Heart right ventricle (tissue), 16 donors: ENCODE measurements at regions of chr3 and their contacts with region 1.

Region 1: GRCh38 chr3:149717391-149718056 is 34.8 kb downstream of the COMMD2 start:
- DNase-seq: peak in 1 of 2 donors; percentile 66
- ATAC-seq: peak in 7 of 8 donors; percentile 51 to 79 (median 72)
- H3K4me3 ChIP-seq: peak overlapping the region in 3 of 10 donors; percentile 15 to 31 (median 25)
- H3K27ac ChIP-seq: peak overlapping the region in 3 of 10 donors; percentile 3 to 35 (median 29)
- H3K4me1 ChIP-seq: peaks cover 0 to 10% (median 3%) of the 10 kb centered on the region in 9 donors
- H3K27me3 ChIP-seq: no peaks in the 10 kb centered on the region
- CTCF ChIP-seq: peak; percentile 54 to 87 (median 77)

Region 2: GRCh38 chr3:149058602-149059001 is 658.9 kb before region 1 on chr3:
- intact Hi-C with region 1: no loop called
- DNase-seq: no peak
- ATAC-seq: no peak
- H3K4me3 ChIP-seq: no peak overlapping the region
- H3K27ac ChIP-seq: no peak overlapping the region
- H3K4me1 ChIP-seq: no peaks in the 10 kb centered on the region
- H3K27me3 ChIP-seq: no peaks in the 10 kb centered on the region
- CTCF ChIP-seq: no peak

Region 3: DNA sequence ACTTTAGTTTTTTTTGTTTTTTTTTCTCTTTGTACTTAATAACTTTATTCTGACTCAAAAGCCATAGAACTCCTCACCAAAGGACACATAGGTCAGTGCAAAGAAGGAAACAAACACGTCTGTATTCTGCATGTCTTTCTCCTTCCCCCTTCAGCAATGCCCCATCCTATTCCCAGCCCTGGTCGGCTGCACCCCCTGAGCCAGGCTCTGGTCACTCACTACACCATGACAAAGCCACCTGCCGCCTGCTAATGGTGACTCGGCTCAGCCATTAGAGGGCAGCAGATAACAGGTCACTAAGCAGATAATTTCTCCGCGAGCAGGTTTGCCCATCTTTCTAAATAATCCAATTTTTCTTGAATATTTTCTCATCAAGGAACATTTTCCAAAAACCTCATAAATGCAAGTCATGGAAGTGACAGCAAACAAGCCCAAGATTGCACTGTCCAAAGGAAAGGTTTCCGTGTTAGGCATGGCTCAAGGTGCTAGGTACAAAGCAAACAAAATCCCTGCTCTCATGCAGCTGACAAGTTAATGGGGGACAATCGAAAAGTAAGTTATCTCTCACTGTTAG is 205.2 kb before region 1 on chr3:
- intact Hi-C with region 1: loop called (anchors 1 to 5 kb)
- DNase-seq: peak; percentile 40 to 62
- ATAC-seq: peak; percentile 74 to 86 (median 80)
- H3K4me3 ChIP-seq: no peak overlapping the region
- H3K27ac ChIP-seq: no peak overlapping the region
- H3K4me1 ChIP-seq: peaks cover 0 to 29% (median 13%) of the 10 kb centered on the region in 9 donors
- H3K27me3 ChIP-seq: no peaks in the 10 kb centered on the region
- CTCF ChIP-seq: peak; percentile 71 to 91 (median 87)

Region 4: GRCh38 chr3:149527531-149528339 is 189.8 kb before region 1 on chr3:
- intact Hi-C with region 1: loop called in 9 of 10 experiments (anchors 5 kb)
- DNase-seq: peak in 1 of 2 donors; percentile 36
- ATAC-seq: peak; percentile 65 to 86 (median 70)
- H3K4me3 ChIP-seq: no peak overlapping the region
- H3K27ac ChIP-seq: peak overlapping the region in 6 of 10 donors; percentile 10 to 62 (median 36)
- H3K4me1 ChIP-seq: peaks cover under 1 to 55% (median 22%) of the 10 kb centered on the region in 9 donors
- H3K27me3 ChIP-seq: no peaks in the 10 kb centered on the region
- CTCF ChIP-seq: peak in 7 of 9 donors; percentile 22 to 68 (median 44)

Region 5: DNA sequence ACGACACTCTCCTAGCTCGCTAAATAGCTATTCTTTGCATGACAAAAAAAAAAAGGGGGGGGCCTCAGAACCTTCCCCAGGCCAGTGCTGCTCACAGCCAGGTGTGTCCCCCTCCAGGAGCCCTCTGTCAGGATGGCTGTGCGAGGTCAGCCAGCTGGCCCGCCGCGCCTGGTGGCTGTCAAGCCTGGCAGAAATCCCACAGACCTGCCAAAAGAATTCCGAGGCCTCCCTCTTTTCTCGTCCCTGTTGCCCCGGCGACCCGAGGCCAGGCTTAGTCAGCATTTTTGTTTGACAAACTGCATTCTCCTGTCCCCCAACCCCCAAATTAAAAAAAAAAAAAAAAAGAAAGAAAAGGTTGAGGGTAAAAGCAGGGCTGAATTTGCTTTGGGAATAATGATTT is 181.1 kb before region 1 on chr3:
- intact Hi-C with region 1: loop called in 5 of 10 experiments (anchors 5 kb)
- DNase-seq: peak; percentile 76 to 78
- ATAC-seq: peak; percentile 77 to 91 (median 86)
- H3K4me3 ChIP-seq: peak overlapping the region in 4 of 10 donors; percentile 8 to 13 (median 11)
- H3K27ac ChIP-seq: peak overlapping the region in 5 of 10 donors; percentile 5 to 53 (median 23)
- H3K4me1 ChIP-seq: peaks cover 8 to 75% (median 52%) of the 10 kb centered on the region in 9 donors
- H3K27me3 ChIP-seq: no peaks in the 10 kb centered on the region
- CTCF ChIP-seq: no peak

Region 6: DNA sequence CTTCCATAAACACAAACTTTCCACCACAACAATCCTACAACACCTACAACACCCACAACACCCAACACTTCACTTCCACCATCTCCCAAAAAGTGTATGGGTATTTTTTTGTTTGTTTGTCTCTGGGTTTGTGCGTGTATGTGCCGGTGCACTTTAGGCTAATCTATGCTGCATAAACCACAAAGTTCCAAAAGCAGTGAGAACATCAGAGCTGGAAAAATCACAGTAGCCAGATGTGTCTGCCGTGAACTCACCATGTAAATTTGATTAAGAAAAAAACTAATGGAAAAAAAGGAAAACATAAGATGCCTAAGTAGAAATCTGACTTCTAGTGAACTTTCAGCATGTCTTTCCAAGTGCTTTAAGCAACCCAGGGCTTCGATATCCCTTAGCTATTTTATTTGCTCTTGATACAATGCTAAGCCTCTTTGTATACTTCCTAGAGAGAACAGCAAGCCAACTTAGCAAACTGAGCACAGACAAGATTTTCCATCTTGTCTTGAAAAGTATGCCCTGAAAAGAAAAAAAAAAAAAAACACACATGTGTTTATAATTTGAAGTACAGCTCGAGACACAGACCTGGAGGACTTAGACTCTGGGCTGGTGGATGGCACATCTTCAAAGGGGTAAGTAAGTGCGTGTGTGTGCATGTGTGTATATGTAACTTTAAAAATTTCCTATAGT is 151.1 kb before region 1 on chr3:
- intact Hi-C with region 1: loop called in 2 of 10 experiments (anchors 5 kb)
- DNase-seq: no peak
- ATAC-seq: peak in 3 of 8 donors; percentile 10 to 31 (median 16)
- H3K4me3 ChIP-seq: no peak overlapping the region
- H3K27ac ChIP-seq: peak overlapping the region in 3 of 10 donors; percentile 7 to 59 (median 11)
- H3K4me1 ChIP-seq: peaks cover 2 to 56% (median 36%) of the 10 kb centered on the region in 9 donors
- H3K27me3 ChIP-seq: no peaks in the 10 kb centered on the region
- CTCF ChIP-seq: no peak

Region 7: DNA sequence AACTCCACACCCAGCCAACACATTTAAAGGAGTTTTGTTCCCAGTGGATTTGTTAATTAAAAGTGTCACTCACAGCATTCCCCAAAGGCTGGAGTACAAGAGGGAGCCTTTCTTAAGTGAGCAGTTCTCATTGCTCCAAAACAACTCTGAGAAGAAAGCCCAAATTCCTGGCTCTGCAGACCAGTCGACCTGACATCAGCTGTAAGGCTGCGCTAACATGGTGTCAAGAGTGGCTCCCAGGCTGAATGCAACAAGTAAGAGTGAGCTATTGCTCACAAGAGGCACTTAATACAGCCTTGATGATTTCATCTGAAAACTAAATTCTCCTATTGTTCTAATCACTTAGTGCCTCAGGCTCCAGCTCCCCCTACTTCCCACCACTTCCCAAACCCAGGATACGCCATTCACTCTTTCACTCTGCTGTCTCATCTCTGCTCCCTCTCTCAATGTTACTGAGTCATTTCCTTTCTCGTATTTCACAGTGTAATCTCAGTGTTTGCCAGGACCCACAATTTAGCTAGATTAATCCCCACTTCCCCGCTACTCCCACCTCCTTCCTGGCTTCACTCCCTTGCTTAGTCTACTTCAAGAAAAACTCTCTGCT is 141.5 kb before region 1 on chr3:
- intact Hi-C with region 1: loop called in 1 of 10 experiments (anchors 5 kb)
- DNase-seq: peak in 1 of 2 donors; percentile 68
- ATAC-seq: peak; percentile 71 to 89 (median 80)
- H3K4me3 ChIP-seq: peak overlapping the region in 6 of 10 donors; percentile 2 to 22 (median 8)
- H3K27ac ChIP-seq: peak overlapping the region; percentile 68 to 93 (median 82)
- H3K4me1 ChIP-seq: peaks cover 6 to 100% (median 92%) of the 10 kb centered on the region in 9 donors
- H3K27me3 ChIP-seq: peaks cover 0 to 3% (median 0%) of the 10 kb centered on the region in 7 donors
- CTCF ChIP-seq: peak in 1 of 9 donors; percentile 11